ENCODE measurements at regions of chr1 and their contacts with region 1.

Region 1: GRCh38 chr1:16206547-16207317 is 5.7 kb downstream of the ARHGEF19 start:
- DNase-seq: peak; percentile 97 to 98 (median 97)
- ATAC-seq: peak; percentile 93 to 95 (median 94)
- H3K4me3 ChIP-seq: peak overlapping the region; percentile 32 to 56 (median 51)
- H3K27ac ChIP-seq: peak overlapping the region; percentile 67 to 75 (median 70)
- H3K4me1 ChIP-seq: peaks cover 0 to 6% (median 2%) of the 10 kb centered on the region in 4 donors
- H3K27me3 ChIP-seq: no peaks in the 10 kb centered on the region
- CTCF ChIP-seq: no peak
- POLR2A ChIP-seq: peak; percentile 72

Region 2: GRCh38 chr1:16243936-16244649 is 37.4 kb after region 1 on chr1:
- intact Hi-C with region 1: loop called in 1 of 2 experiments (anchors 5 kb)
- DNase-seq: peak; percentile 54 to 73 (median 72)
- ATAC-seq: peak; percentile 68 to 77 (median 74)
- H3K4me3 ChIP-seq: no peak overlapping the region
- H3K27ac ChIP-seq: no peak overlapping the region
- H3K4me1 ChIP-seq: peaks cover 0 to 18% (median 4%) of the 10 kb centered on the region in 4 donors
- H3K27me3 ChIP-seq: no peaks in the 10 kb centered on the region
- CTCF ChIP-seq: peak; percentile 86 to 90 (median 87)
- POLR2A ChIP-seq: no peak

Measured in right lobe of liver (tissue), 6 donors.